Dendritic cell treated with granulocyte-macrophage colony-stimulating factor and Interleukin-4, amounts not matched to agents 40 ng/mL and 50 ng/mL, for 4 days (primary cell): ENCODE measurements at regions of chr16 and their contacts with region 1.

Region 1: GRCh38 chr16:80656711-80657150 is 115.9 kb downstream of the DYNLRB2 start:
- H3K4me3 Mint-ChIP-seq: no peak overlapping the region
- H3K27ac Mint-ChIP-seq: no peak overlapping the region
- H3K4me1 Mint-ChIP-seq: peaks cover 12% of the 10 kb centered on the region
- H3K27me3 Mint-ChIP-seq: peaks cover 11% of the 10 kb centered on the region

Region 2: DNA sequence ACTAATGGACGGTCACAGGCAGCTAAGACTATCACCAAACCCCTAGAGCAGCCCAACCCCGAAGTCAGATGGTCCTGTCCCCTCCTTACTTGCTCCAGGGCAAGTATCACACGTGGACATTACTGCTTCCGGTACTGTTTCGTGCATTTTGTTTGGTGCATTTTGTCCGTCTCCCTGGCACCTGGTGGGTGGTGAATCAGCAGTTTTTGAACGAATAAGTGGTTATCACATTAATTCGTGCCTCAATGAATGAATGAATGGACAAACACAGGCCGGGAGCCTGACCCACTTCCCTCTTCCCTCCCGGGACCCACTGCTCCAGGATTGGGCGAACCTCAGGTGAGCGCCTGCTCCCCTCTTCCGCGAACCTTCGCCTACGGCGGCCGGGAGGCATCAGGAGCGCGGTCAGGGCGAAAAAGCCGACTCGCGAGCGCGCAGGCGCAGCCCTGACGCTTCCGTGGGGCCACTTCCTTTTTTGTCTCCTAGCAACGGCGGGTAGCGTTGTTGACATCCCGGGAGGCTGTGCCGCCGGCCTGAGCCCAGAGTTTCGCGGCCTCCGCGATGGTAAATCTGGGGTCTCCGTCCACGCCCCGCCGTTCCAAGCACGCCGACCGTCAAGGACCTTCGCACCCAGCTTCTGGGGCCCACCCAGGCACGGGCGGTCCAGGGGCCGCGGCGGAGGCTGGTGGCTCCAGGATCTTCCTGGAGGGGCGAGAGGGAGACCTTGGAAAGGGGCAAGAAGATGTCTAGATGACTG is 116.0 kb before region 1 on chr16 and contains the start of gene DYNLRB2:
- intact Hi-C with region 1: loop called (anchors 10 kb)
- H3K4me3 Mint-ChIP-seq: peak within 1 kb of the TSS; percentile 79
- H3K27ac Mint-ChIP-seq: peak within 1 kb of the TSS; percentile 89
- H3K4me1 Mint-ChIP-seq: peaks cover 12% of the 10 kb centered on the region
- H3K27me3 Mint-ChIP-seq: peaks cover 20% of the 10 kb centered on the region

Region 3: GRCh38 chr16:80580109-80580832 is 76.5 kb before region 1 on chr16:
- intact Hi-C with region 1: loop called (anchors 10 kb)
- H3K4me3 Mint-ChIP-seq: no peak overlapping the region
- H3K27ac Mint-ChIP-seq: no peak overlapping the region
- H3K4me1 Mint-ChIP-seq: peaks cover 30% of the 10 kb centered on the region
- H3K27me3 Mint-ChIP-seq: peaks cover 14% of the 10 kb centered on the region